Vagina (tissue), 2 donors: ENCODE measurements at regions of chr2 and their contacts with region 1.

Region 1: GRCh38 chr2:97697252-97698235 is 15.8 kb upstream of the ZAP70 start:
- DNase-seq: peak in 1 of 2 donors; percentile 93
- H3K4me3 ChIP-seq: no peak overlapping the region
- H3K27ac ChIP-seq: no peak overlapping the region
- H3K4me1 ChIP-seq: peaks cover 5% of the 10 kb centered on the region
- H3K27me3 ChIP-seq: no peaks in the 10 kb centered on the region
- CTCF ChIP-seq: peak; percentile 85 to 98 (median 94)
- POLR2A ChIP-seq: no peak

Region 2: DNA sequence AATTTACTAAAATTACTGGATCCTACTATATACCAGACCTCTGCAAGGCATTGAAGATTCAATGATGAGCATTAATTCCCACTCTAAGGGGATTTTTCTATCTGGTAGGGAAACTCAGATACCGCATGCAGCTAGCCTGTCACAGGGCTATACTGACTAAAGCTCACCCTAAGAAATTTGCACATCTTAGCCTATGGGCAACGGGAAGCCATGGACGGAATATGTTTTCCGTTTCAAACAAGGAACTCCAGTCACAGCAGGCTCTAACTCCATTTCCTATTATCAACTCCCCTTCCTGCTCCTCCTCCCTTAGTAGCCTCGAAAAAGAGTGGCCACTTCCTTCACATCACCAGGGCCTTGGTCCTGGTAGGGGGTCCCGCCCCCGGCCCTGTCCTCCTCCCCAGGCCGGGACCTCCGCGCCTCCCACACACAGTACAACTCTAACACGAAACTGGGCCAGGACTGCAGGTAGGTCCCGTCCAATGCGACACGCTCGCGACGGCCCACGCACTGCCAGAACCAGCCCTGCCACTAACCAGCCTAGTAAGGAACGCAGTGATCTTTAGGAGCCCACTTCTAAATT is 52.3 kb before region 1 on chr2:
- intact Hi-C with region 1: no loop called
- DNase-seq: no peak
- H3K4me3 ChIP-seq: peak overlapping the region; percentile 74 to 97
- H3K27ac ChIP-seq: peak overlapping the region; percentile 96
- H3K4me1 ChIP-seq: peaks cover 21% of the 10 kb centered on the region
- H3K27me3 ChIP-seq: no peaks in the 10 kb centered on the region
- CTCF ChIP-seq: no peak
- POLR2A ChIP-seq: no peak

Region 3: DNA sequence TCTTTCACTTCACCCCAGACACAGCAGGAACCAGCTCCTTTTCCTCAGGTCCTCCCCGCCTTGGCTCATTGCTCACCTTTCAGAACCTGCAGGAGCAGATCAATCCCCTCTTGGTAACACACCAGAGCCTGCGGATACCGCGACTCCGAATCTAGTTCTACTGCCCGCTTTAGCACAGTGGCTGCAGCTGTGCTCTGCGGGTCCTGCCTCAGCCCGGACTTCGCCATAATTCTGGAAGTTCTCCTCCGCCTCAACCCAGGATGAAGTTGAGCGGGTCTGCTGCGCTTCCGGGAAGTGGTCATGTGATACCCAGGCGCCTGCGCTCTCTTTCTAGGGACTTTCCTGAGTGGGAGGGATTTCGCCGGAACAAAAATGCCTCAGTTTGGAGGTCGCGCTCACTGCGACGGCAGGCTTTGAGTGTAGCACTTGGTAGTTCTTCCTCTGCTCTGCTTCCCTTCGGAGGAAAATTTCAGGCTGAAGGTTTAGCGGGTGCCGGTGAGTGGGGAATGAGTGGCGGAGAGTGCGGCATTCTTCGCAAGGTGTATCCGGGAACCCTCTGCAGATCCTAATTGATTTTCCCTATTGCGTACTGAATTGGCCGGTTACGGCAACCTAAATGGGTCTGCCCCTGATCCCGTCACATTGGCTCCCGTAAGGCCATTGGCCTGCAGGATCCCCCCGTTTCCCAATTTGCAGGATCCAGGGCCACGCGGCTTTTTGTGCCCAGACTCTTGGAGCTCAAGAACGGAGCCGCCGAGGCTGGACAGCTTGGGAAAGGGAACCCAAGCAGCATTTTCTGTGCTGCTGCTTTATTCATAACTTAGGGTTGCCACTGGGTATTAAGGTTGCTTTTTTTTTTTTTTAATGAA is 1483.4 kb after region 1 on chr2 and contains the starts of genes MITD1 and MRPL30:
- intact Hi-C with region 1: loop called (anchors 10 kb)
- DNase-seq: peak; percentile 94 to 97
- H3K4me3 ChIP-seq: peak within 1 kb of the TSS; percentile 59 to 70
- H3K27ac ChIP-seq: peak within 1 kb of the TSS; percentile 44
- H3K4me1 ChIP-seq: peaks cover 45% of the 10 kb centered on the region
- H3K27me3 ChIP-seq: no peaks in the 10 kb centered on the region
- CTCF ChIP-seq: no peak
- POLR2A ChIP-seq: peak in 1 of 2 donors; percentile 21
- total RNA-seq, gene MITD1: 23.3 TPM
- total RNA-seq, gene MRPL30: 27.0 TPM